PC-3 (cell line): ENCODE measurements at regions of chr5 and their contacts with region 1.

Region 1: GRCh38 chr5:176573564-176574296 is 24.6 kb downstream of the CDHR2 start:
- DNase-seq: peak; percentile 63
- ATAC-seq: peak; percentile 67
- H3K4me3 ChIP-seq: no peak overlapping the region
- H3K27ac ChIP-seq: no peak overlapping the region
- H3K4me1 ChIP-seq: peaks cover 4% of the 10 kb centered on the region; the same call in 1 of the 2 replicates
- H3K27me3 ChIP-seq: no peaks in the 10 kb centered on the region
- CTCF ChIP-seq: peak; percentile 89

Region 2: DNA sequence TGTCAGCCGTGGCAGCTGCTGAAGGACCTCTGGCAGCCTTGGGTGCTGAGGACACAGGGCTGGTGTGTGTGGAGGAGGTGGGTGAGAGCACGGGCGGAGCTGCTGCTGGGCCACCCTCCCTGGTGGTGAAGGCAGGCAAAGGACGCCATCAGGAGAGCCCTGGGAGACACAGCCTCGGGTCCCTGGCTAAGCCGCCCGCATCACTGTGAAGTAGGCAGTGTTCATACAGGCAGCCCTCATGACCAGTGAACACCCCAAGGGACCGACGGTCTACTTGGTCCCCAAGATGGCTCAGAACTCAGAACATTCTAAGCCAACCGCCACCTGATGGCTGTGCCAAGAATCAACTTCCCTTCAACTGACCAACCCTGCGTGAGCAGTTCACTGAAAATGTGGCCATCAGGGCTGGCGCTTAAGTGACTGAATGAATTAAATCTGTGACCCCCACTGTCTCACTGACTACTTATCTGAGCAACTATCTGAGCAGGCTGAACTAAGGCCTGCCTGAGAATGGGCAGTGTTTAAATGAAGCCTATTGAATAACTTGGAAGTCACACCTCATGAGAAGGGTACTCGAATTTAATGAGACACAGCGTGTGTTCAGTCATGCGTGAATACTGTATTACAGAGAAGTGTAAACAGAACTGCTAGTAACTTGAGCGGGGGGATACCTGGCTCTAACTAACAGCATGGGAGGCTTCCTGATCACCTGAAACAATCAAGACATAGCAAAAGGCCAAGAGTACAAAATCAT is 390.2 kb before region 1 on chr5:
- CTCF ChIA-PET with region 1: no interaction called
- POLR2A ChIA-PET with region 1: no interaction called
- intact Hi-C with region 1: no loop called
- DNase-seq: no peak
- ATAC-seq: no peak
- H3K4me3 ChIP-seq: no peak overlapping the region
- H3K27ac ChIP-seq: no peak overlapping the region
- H3K4me1 ChIP-seq: no peaks in the 10 kb centered on the region
- H3K27me3 ChIP-seq: no peaks in the 10 kb centered on the region
- CTCF ChIP-seq: no peak

Region 3: DNA sequence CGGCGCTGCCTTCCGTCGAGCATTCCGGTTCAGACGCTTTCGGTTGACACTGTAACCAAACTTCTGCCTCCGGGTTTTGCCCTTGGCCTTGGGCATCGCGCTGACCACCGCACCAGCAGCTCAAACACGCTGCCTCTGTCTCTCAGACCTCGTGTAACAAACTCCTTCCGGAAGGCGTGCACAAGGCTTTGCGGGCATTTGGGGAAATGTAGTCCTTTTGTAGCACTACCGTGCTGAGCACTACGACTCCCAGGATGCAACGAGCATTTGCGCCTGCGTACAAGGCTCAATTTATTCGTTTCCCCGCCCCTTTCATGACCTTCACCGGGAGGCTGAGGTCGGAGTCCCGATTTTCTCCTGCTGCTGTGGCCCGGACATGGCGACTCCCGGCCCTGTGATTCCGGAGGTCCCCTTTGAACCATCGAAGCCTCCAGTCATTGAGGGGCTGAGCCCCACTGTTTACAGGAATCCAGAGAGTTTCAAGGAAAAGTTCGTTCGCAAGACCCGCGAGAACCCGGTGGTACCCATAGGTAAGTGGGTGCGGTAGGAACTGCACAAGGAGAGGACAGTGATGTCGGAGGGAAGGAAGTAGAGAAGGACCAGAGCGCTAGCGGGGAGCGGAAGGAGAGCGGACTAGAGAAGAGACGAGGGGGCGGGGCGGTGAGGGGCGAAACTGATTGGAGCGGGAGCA is 185.1 kb before region 1 on chr5 and contains the starts of genes HIGD2A and NOP16:
- CTCF ChIA-PET with region 1: no interaction called
- POLR2A ChIA-PET with region 1: no interaction called
- intact Hi-C with region 1: loop called (anchors 1 kb)
- DNase-seq: peak; percentile 99
- ATAC-seq: peak; percentile 83
- H3K4me3 ChIP-seq: peak within 1 kb of the TSS; percentile 94
- H3K27ac ChIP-seq: peak within 1 kb of the TSS; percentile 94
- H3K4me1 ChIP-seq: peaks cover 14% of the 10 kb centered on the region
- H3K27me3 ChIP-seq: no peaks in the 10 kb centered on the region
- CTCF ChIP-seq: no peak
- total RNA-seq, gene HIGD2A: 164 and 174 TPM in 2 replicates
- total RNA-seq, gene NOP16: 92.6 and 103 TPM in 2 replicates

Region 4: GRCh38 chr5:176405656-176406427 is 167.9 kb before region 1 on chr5:
- CTCF ChIA-PET with region 1: no interaction called
- POLR2A ChIA-PET with region 1: no interaction called
- intact Hi-C with region 1: loop called (anchors 2 kb)
- DNase-seq: no peak
- ATAC-seq: 0 out of 2 replicates have a peak, but pooled peaks have one; percentile 12
- H3K4me3 ChIP-seq: no peak overlapping the region
- H3K27ac ChIP-seq: 0 out of 2 replicates have a peak overlapping the region, but pooled peaks have one; percentile 19
- H3K4me1 ChIP-seq: peaks cover 31% of the 10 kb centered on the region
- H3K27me3 ChIP-seq: no peaks in the 10 kb centered on the region
- CTCF ChIP-seq: peak; percentile 28; the same call in 1 of the 2 replicates

Region 5: GRCh38 chr5:176415952-176416924 is 157.5 kb before region 1 on chr5 and contains the start of gene CLTB:
- CTCF ChIA-PET with region 1: interaction called, 3 read pairs
- POLR2A ChIA-PET with region 1: no interaction called
- intact Hi-C with region 1: loop called (anchors 2 kb)
- DNase-seq: peak; percentile 93
- ATAC-seq: peak; percentile 83
- H3K4me3 ChIP-seq: peak within 1 kb of the TSS; percentile 94
- H3K27ac ChIP-seq: peak within 1 kb of the TSS; percentile 69
- H3K4me1 ChIP-seq: peaks cover 59% of the 10 kb centered on the region
- H3K27me3 ChIP-seq: no peaks in the 10 kb centered on the region
- CTCF ChIP-seq: peak; percentile 58
- total RNA-seq, gene CLTB: 354 and 460 TPM in 2 replicates

Region 6: DNA sequence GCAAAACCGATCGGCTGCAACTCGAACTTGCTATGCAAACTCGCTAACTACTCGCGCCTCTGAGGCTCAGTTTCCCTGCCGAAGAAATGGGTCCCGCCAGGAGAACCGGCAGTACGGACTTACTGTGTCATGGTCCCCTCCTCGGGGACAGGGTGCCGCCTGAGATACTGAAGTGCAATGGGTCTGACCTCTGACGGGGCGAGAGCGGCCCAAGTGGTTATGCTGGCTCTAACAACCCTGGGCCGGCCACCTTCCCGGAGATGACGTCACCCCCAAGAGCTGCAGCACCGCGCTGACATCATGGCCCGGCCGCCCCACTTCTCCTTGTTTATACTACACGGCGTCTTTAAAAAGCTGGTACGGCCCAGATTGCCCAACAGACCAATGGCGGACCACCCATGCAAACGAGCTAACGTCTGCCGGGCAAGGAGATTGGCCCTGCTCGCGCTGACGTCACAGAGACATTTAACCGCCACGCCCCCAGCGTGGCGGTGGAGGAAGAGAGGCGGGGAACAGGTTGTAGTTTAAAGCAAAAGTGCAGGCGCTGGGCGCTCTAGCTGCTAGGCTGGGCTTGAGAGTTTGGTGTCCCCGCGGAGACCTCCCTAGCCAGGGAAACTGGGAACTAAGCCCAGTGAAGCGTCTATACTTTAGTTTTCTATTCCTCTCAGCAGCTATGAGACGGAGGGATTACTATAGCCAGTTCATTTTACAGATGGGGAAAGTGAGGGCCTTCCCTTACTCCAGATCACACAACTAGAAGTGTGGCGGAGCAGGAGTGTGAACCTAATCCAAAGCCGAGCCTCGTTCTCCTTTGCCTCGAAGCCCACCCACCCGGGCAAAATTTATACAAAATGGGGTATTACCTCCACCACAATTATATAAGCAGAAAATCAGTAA is 35.9 kb before region 1 on chr5:
- CTCF ChIA-PET with region 1: interaction called, 15 read pairs
- POLR2A ChIA-PET with region 1: interaction called, 3 read pairs
- intact Hi-C with region 1: loop called (anchors 1 kb)
- DNase-seq: peak; percentile 99
- ATAC-seq: peak; percentile 75
- H3K4me3 ChIP-seq: peak overlapping the region; percentile 93
- H3K27ac ChIP-seq: peak overlapping the region; percentile 74
- H3K4me1 ChIP-seq: peaks cover 48% of the 10 kb centered on the region
- H3K27me3 ChIP-seq: no peaks in the 10 kb centered on the region
- CTCF ChIP-seq: no peak

Region 7: DNA sequence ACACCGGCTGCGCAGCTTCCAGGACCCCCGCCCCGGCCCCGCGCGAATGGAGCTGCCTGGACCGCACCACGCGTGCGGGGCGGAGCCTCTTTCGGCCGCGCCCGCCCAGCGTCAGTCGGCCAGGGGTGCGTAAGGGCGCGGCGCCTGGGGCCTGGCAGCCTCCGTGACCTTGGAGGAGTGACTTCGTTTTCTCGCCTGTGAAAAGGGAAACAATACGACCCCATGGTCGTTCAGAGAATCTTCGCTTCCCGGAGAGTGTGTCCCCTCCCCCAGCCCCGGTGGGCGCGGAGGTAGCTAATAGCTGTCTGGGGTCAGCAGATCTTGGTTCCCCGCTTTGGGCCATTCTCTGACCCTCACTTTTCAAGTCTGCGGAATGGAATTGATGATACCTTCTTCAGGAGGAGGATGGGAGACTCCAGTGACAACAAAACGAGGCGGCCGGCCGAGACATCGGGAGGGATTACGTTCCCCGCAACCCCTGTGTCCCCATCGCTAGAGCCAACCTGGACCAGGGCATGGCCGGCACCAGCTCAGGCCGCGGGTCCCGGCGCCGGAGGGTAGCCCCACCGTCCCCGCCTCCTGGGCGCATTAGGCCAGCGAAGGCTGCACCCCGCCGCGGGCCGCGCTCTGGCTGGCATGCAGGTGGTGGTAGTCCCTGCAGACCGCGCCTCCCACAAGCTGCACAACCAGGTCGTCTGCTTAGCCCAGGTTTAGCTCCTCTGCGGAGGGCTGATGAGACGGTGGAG is 30.1 kb before region 1 on chr5:
- CTCF ChIA-PET with region 1: interaction called, 15 read pairs
- POLR2A ChIA-PET with region 1: no interaction called
- intact Hi-C with region 1: loop called (anchors 1 kb)
- DNase-seq: peak; percentile 73
- ATAC-seq: peak; percentile 83
- H3K4me3 ChIP-seq: peak overlapping the region; percentile 80
- H3K27ac ChIP-seq: peak overlapping the region; percentile 75
- H3K4me1 ChIP-seq: peaks cover 53% of the 10 kb centered on the region
- H3K27me3 ChIP-seq: no peaks in the 10 kb centered on the region
- CTCF ChIP-seq: no peak

Region 8: DNA sequence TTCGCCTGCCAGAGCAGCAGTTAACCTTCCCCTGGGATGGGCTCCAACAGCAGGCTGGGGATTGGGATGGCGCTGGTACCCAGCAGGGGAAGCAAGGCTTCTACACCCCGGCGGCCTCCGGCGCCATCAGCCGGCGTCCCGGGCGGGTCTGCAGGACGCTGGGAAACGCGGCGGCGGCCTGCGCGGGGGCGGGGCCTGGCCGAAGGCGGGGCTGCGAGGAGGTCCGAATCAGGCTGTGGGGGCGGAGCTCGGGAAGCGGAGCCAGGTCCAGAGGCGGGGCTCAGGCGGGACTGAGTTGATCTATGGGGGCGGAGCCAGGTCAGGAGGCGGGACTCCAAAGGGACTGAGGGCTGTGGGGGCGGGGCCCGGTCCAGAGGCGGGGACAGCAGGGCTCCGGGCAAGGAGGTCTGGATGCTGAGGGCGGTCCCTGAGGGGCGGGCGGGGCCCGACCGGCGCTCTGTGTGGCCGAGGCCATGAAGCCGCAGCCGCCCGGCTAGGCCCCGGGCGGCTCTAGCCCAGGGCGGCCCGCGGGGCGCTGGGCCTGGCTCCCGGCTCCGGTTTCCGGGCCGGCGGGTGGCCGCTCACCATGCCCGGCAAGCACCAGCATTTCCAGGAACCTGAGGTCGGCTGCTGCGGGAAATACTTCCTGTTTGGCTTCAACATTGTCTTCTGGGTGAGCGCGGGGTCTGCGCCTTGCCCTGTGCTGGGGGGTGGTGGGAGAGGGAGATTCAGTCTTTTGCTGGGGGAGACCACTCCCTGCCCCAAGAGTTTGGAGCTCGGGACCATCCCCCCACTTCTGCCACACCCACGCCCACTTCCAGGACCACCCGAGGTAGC is 73.5 kb after region 1 on chr5 and contains the start of gene TSPAN17:
- CTCF ChIA-PET with region 1: interaction called, 5 read pairs
- POLR2A ChIA-PET with region 1: interaction called, 3 read pairs
- intact Hi-C with region 1: loop called (anchors 1 kb)
- DNase-seq: peak; percentile 99
- ATAC-seq: peak; percentile 91
- H3K4me3 ChIP-seq: peak within 1 kb of the TSS; percentile 86
- H3K27ac ChIP-seq: no peak within 1 kb of the TSS
- H3K4me1 ChIP-seq: peaks cover 17% of the 10 kb centered on the region
- H3K27me3 ChIP-seq: no peaks in the 10 kb centered on the region
- CTCF ChIP-seq: peak; percentile 51
- total RNA-seq, gene TSPAN17: 47.3 and 56.3 TPM in 2 replicates

Region 9: DNA sequence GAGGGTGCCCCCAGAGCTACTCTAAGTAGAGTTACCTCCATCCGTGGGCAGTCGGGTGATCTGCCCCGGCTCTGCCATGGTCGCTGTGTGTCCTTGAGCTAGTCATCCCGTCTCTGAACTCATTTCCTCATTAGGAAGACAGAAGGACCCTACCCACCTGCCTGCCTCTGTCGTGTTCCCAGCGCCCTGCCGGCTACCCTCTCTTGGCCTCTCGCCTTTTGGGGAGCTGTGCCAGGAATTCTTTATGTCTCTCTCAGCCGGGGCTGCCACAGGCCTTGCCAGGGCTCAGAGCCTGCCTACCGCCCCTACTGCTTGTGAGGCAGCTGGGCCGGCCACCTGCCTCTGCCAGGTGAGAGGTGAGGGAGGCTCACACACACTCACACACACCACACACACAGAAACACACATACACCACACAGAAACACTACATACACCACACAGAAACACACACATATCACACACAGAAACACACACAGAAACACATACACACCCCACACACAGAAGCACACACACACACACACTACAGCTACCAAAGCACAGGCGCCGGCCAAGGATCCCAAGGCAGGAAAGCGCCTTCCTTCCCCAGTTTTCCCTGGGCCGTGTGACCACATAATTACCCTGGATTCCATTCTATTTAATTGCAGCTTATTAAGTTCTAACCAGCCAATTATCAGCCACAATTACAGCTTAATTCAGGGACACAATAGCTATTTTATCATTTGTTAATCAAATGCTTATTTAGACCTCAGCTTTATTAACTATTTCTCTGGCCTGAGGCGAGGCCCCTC is 278.3 kb after region 1 on chr5:
- CTCF ChIA-PET with region 1: no interaction called
- POLR2A ChIA-PET with region 1: no interaction called
- intact Hi-C with region 1: no loop called
- DNase-seq: no peak
- ATAC-seq: no peak
- H3K4me3 ChIP-seq: no peak overlapping the region
- H3K27ac ChIP-seq: no peak overlapping the region
- H3K4me1 ChIP-seq: no peaks in the 10 kb centered on the region
- H3K27me3 ChIP-seq: peaks cover 5% of the 10 kb centered on the region; the same call in 1 of the 2 replicates
- CTCF ChIP-seq: no peak

Region 10: DNA sequence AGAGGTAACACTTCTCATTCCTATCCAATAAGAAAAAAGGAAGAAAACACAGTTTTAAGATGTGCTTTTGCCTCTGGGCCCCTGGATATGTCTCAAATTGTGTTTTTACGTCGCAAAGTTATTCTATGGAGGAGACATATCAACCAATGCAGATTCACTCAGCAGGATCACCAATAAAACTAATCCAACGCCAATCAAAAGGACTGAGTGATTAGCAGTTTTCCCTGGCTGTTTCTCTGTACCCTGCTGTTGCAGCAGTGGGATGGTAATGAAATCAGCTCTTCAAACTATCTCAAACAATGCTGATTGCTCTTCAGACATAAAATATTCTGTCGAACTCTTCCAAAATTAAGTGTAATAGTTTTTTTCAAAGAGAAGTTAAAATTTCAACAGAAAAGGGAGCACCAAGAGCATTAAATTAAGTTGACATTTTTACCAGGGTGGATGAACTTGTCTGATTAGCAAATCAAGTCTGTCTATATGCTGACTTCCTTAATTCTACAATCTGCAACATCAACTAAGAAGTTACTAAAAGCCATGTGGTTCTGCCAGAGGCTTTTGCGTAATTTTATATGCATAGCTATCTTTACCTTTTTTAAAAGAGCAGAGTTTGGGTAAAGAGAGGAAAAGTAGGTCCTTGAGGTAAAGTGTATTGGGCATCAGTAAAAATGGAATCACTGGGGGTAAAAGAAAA is 335.1 kb after region 1 on chr5:
- CTCF ChIA-PET with region 1: no interaction called
- POLR2A ChIA-PET with region 1: no interaction called
- intact Hi-C with region 1: no loop called
- DNase-seq: no peak
- ATAC-seq: no peak
- H3K4me3 ChIP-seq: no peak overlapping the region
- H3K27ac ChIP-seq: no peak overlapping the region
- H3K4me1 ChIP-seq: no peaks in the 10 kb centered on the region
- H3K27me3 ChIP-seq: no peaks in the 10 kb centered on the region
- CTCF ChIP-seq: no peak